HepG2 (cell line): ENCODE measurements at regions of chr7 and their contacts with region 1.

Region 1: DNA sequence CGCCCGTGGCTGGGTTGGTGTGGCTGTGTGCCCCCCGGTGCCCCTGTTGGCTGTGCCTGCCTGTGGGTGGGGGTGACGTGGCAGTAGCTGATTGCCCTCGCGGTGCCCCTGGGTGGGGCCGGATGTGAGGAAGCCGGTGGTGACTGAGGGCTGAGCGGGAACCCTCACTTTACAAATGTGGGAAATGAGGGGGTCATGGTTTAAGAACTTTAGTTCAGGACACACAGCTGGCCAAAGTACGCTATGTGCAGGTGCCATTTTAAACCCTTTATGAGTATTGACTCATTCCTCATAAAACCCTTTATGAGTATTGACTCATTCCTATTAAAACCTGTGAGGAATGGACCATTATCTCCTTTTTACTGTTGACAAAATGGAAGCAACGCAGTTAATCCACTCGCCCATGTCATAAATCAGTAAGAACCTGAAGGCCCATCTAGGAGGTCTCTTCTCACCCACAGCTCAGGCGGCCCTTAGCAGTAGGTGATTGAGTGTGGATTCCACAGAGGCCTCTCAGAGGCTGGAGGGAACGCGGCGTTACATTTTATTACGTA is 290.1 kb upstream of the COBL start:
- DNase-seq: no peak
- ATAC-seq: no peak
- H3K4me3 ChIP-seq: no peak overlapping the region
- H3K27ac ChIP-seq: no peak overlapping the region
- H3K4me1 ChIP-seq: no peaks in the 10 kb centered on the region
- H3K27me3 ChIP-seq: peaks cover 0 to 2% of the 10 kb centered on the region in 2 experiments; a peak in 1 of 5 replicates
- CTCF ChIP-seq: no peak
- EP300 ChIP-seq: no peak
- POLR2A ChIP-seq: no peak
- RAD21 ChIP-seq: no peak

Region 2: DNA sequence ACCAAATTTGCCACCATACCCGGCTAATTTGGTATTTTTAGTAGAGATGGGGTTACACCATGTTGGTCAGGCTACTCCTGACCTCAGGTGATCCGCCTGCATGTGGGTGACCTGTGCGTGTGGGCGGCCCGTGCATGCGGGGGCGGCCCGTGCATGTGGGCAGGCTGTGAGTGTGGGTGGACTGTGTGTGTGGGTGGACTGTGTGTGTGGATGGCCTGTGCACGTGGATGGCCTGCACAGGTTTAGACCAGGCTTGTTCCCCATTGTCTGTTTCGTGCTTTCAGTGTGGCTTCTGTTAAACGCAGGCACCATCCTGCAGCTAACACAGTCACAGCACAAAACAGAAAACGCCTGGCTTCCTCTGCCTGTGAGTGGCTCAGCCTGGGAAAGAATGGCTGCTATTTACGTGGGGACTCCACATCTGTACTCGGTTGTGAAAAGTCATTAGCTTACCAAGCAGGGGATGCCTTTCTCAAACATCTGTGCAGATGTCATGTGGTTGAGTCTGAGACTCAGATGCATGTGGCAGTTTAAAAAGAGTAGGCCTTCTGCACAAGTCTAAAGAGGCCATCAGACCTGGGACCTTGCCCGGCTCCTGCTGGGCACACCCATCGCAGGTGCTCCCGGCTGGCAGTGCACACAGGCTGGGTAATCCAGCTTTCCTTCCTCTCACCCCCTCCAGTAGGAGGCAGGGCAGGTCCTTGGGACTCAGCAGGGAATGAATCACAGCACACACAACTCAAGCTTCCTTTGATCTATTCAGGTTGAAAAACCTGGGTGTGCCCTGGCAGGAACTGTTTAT is 381.7 kb before region 1 on chr7:
- CTCF ChIA-PET with region 1: no interaction called
- POLR2A ChIA-PET with region 1: no interaction called
- in situ Hi-C with region 1: no loop called
- intact Hi-C with region 1: no loop called
- DNase-seq: peak; percentile 31
- ATAC-seq: peak; percentile 89
- H3K4me3 ChIP-seq: no peak overlapping the region
- H3K27ac ChIP-seq: no peak overlapping the region
- H3K4me1 ChIP-seq: no peaks in the 10 kb centered on the region
- H3K27me3 ChIP-seq: no peaks in the 10 kb centered on the region
- CTCF ChIP-seq: peak; percentile 69
- EP300 ChIP-seq: no peak
- POLR2A ChIP-seq: no peak
- RAD21 ChIP-seq: no peak

Region 3: GRCh38 chr7:51518646-51519045 is 88.0 kb before region 1 on chr7:
- CTCF ChIA-PET with region 1: no interaction called
- POLR2A ChIA-PET with region 1: no interaction called
- in situ Hi-C with region 1: no loop called
- intact Hi-C with region 1: no loop called
- DNase-seq: no peak
- ATAC-seq: no peak
- H3K4me3 ChIP-seq: no peak overlapping the region
- H3K27ac ChIP-seq: no peak overlapping the region
- H3K4me1 ChIP-seq: no peaks in the 10 kb centered on the region
- H3K27me3 ChIP-seq: no peaks in the 10 kb centered on the region
- CTCF ChIP-seq: no peak
- EP300 ChIP-seq: no peak
- POLR2A ChIP-seq: no peak
- RAD21 ChIP-seq: no peak

Region 4: DNA sequence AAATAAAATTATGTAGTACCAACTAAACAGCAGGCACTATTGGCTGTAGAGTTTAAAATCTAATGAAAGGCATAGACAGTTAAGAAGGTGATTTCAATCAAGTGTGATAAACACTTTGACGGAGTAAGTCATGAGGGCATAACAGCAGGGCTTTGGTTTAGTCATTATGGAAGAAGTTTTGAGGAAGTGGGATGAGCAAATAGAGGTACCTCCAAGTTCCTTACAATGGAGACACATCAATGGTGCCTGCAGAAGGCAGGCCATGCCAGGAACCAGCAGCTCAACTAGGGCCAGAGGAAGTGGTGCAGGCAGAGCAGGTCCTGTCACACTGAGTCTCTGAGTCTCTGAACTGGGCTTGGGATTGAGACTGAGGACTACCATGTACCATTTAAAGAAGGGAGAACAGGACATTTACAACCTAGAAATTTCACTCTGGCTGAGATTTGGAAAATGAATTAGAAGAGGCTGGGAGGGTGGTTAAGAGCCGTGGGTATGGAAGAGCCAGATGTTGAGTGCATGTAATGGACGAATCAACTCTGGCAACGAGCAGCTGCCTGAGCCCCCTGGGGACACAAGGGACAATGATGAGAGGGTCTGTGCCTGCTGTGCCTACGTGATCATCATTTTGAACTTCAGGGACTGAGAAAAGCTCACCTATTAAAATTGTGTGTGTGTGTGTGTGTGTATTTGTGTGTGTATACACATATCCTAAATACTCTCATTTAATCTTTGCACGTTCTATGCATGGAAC is 1220.0 kb after region 1 on chr7:
- CTCF ChIA-PET with region 1: no interaction called
- POLR2A ChIA-PET with region 1: no interaction called
- in situ Hi-C with region 1: no loop called
- intact Hi-C with region 1: loop called (anchors 10 kb)
- DNase-seq: no peak
- ATAC-seq: no peak
- H3K4me3 ChIP-seq: no peak overlapping the region
- H3K27ac ChIP-seq: no peak overlapping the region
- H3K4me1 ChIP-seq: no peaks in the 10 kb centered on the region
- H3K27me3 ChIP-seq: no peaks in the 10 kb centered on the region
- CTCF ChIP-seq: no peak
- EP300 ChIP-seq: no peak
- POLR2A ChIP-seq: no peak
- RAD21 ChIP-seq: no peak